HEK293 (cell line): ENCODE measurements at regions of chr12 and their contacts with region 1.

Region 1: GRCh38 chr12:26884765-26885576 is 52.0 kb upstream of the ITPR2 start:
- H3K4me3 ChIP-seq: no peak overlapping the region
- H3K27ac ChIP-seq: no peak overlapping the region
- H3K4me1 ChIP-seq: no peaks in the 10 kb centered on the region
- CTCF ChIP-seq: peak; percentile 84

Region 2: GRCh38 chr12:26768611-26769603 is 116.1 kb before region 1 on chr12:
- CTCF ChIA-PET with region 1: no interaction called
- POLR2A ChIA-PET with region 1: no interaction called
- H3K4me3 ChIP-seq: no peak overlapping the region
- H3K27ac ChIP-seq: no peak overlapping the region
- H3K4me1 ChIP-seq: peaks cover 4% of the 10 kb centered on the region
- CTCF ChIP-seq: no peak

Region 3: DNA sequence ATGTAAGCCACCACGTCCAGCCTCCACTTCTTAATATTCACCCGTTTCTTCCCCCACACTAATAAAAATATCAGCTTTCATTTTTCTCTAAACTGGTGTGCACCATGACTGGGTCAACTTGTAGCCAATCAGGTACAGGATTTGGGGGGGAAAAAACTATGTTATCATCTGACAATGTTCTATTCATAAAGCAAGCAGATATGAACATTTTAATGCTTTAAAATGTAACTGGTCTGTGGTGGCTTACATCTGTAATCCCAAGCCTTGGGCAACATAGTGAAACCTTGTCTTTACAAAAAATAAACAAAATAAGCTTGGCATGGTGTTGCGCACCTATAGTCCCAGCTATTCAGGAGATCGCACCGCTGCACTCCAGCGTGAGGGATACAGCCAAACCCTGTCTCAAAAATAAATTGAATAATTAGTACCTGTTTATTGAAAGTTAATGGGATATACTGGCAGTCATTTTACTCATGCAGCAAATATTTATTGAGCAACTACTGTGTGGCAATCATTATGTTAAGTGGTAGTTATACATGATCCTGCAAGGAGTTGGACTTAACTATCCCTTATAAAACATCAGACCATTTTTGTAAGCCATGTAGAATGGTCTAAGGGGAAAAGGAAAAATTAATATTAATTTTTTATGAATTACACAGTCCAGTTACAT is 36.7 kb before region 1 on chr12:
- CTCF ChIA-PET with region 1: interaction called, 13 read pairs
- POLR2A ChIA-PET with region 1: interaction called, 3 read pairs
- H3K4me3 ChIP-seq: no peak overlapping the region
- H3K27ac ChIP-seq: no peak overlapping the region
- H3K4me1 ChIP-seq: no peaks in the 10 kb centered on the region
- CTCF ChIP-seq: no peak

Region 4: DNA sequence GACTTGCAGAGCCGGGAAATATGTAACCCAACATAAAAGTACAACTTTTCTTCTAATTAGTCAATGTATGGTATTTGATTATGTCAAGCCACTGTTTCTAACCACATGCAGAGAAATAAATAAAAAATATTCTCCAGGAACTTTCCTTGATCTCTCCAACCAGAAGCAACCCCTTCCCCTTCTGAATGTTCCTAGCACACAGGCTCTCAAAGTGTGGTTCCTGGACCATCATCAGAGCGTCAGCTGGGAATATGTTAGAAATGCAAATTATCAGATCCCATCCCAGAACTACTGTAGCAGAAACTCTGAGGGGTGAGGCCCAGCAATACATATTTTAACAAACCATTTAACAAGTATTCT is 31.0 kb before region 1 on chr12:
- CTCF ChIA-PET with region 1: interaction called, 13 read pairs
- POLR2A ChIA-PET with region 1: no interaction called
- H3K4me3 ChIP-seq: no peak overlapping the region
- H3K27ac ChIP-seq: no peak overlapping the region
- H3K4me1 ChIP-seq: peaks cover 11% of the 10 kb centered on the region
- CTCF ChIP-seq: no peak

Region 5: GRCh38 chr12:26870491-26871419 is 14.2 kb before region 1 on chr12:
- CTCF ChIA-PET with region 1: interaction called, 33 read pairs
- POLR2A ChIA-PET with region 1: no interaction called
- H3K4me3 ChIP-seq: no peak overlapping the region
- H3K27ac ChIP-seq: peak overlapping the region; percentile 34; the same call in 1 of the 2 replicates
- H3K4me1 ChIP-seq: peaks cover 13% of the 10 kb centered on the region
- CTCF ChIP-seq: no peak

Region 6: GRCh38 chr12:26896913-26897312 is 11.9 kb after region 1 on chr12:
- CTCF ChIA-PET with region 1: interaction called, 25 read pairs
- POLR2A ChIA-PET with region 1: no interaction called
- H3K4me3 ChIP-seq: no peak overlapping the region
- H3K27ac ChIP-seq: no peak overlapping the region
- H3K4me1 ChIP-seq: no peaks in the 10 kb centered on the region
- CTCF ChIP-seq: no peak

Region 7: GRCh38 chr12:26906704-26907103 is 21.7 kb after region 1 on chr12:
- CTCF ChIA-PET with region 1: interaction called, 18 read pairs
- POLR2A ChIA-PET with region 1: no interaction called
- H3K4me3 ChIP-seq: no peak overlapping the region
- H3K27ac ChIP-seq: no peak overlapping the region
- H3K4me1 ChIP-seq: no peaks in the 10 kb centered on the region
- CTCF ChIP-seq: no peak

Region 8: DNA sequence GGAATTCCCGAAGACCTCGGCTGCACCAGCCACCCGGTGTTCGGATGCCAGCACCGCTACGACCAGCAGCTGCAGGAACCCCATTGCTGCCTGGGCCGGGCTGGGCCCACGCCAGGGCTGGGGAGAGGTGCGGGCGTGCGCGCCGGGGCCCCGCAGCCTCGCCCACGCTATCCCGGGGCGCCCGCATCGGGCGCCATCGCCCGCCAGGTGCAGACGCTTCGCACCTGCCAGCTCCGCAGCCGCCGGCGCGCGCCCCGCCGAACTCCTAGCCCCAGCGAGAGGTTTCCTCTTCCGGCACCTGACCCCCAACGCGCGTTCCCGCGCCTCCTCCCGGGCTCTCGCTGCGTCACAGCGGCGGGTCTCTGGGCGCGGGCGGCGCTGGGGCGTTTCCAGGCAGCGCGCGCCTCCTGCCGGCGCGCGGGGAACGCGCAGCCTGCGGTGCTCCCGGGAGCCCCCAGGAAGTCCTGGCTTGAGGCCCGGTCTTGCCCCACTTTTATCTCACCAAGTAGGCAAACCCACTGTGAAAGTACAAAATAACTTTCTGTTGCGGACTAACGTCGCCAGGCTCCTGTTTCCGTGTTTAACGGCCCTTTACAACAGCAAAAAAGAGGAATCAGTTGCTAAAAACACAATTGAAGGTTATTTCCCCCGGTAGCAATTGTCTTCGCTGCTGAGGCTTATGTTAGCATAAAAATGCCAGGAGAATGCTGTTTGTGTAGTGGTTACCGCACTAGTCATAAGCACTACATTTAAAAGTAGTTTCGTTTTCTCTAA is 129.3 kb after region 1 on chr12 and contains the start of gene TM7SF3:
- CTCF ChIA-PET with region 1: interaction called, 13 read pairs
- POLR2A ChIA-PET with region 1: no interaction called
- H3K4me3 ChIP-seq: peak within 1 kb of the TSS; percentile 76
- H3K27ac ChIP-seq: peak within 1 kb of the TSS; percentile 47
- H3K4me1 ChIP-seq: peaks cover 6% of the 10 kb centered on the region; the same call in 1 of the 2 replicates
- CTCF ChIP-seq: peak; percentile 71